Esophagus squamous epithelium (tissue), 5 donors: ENCODE measurements at regions of chr12 and their contacts with region 1.

Region 1: GRCh38 chr12:76031537-76032073 is at the start of gene PHLDA1:
- DNase-seq: peak; percentile 66
- H3K4me3 ChIP-seq: peak within 1 kb of the TSS; percentile 70 to 99 (median 86)
- H3K27ac ChIP-seq: peak within 1 kb of the TSS; percentile 94 to 99 (median 98)
- H3K4me1 ChIP-seq: peaks cover 0 to 50% (median 3%) of the 10 kb centered on the region in 3 donors
- H3K27me3 ChIP-seq: no peaks in the 10 kb centered on the region
- CTCF ChIP-seq: peak in 5 of 6 experiments; percentile 45 to 85 (median 74)
- POLR2A ChIP-seq: peak in 2 of 4 donors; percentile 89 to 90
- total RNA-seq, gene PHLDA1: 33.8 to 77.8 (median 56.7) TPM

Region 2: DNA sequence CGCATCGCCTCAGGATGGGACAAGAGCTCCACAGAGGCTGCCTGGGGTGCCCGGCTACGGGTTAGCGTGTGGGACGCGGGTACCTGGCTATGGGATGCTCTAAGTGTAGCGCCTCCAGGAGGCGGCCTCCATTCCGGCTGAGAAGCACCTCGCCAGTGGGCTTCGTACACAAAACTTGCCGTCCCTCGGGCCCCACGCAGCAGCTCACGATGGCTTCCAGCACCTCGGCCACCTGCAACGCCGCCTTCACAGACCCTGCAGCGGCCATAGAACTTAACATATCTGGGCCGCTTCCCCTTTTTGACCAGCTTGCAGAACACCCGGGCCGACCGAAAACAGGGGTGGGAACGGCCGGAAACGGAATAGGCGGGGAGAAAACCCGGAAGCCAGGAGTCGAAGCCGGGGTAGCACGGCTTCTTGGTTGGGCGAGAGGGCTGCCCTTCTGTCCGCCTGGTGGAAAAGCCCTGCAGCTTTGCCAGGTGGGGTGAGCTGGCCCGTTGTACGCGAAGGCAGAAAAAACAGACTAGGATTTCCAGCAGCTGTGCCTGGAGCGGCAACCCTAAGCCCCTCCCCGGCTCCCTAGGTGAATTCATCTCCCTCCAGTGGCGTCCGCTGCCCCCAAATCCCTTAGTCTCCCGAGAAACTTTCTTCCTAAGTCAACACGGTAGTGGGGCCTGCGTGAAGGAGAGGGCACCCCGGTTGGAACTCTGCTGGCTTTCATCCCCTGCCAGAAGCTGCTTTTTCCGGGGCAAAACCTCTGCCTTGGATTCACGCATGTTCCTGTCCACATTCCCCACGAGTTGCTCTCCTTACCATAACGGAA is 316.7 kb after region 1 on chr12 and contains the start of gene BBS10:
- intact Hi-C with region 1: loop called (anchors 10 kb)
- DNase-seq: peak; percentile 70
- H3K4me3 ChIP-seq: peak within 1 kb of the TSS; percentile 67 to 94 (median 74)
- H3K27ac ChIP-seq: peak within 1 kb of the TSS; percentile 84 to 95 (median 91)
- H3K4me1 ChIP-seq: peaks cover 13 to 36% (median 16%) of the 10 kb centered on the region in 3 donors
- H3K27me3 ChIP-seq: no peaks in the 10 kb centered on the region
- CTCF ChIP-seq: peak in 5 of 6 experiments; percentile 22 to 62 (median 55)
- POLR2A ChIP-seq: peak in 2 of 4 donors; percentile 31 to 71
- total RNA-seq, gene BBS10: 2.7 to 8.4 (median 5.4) TPM